GM12878 (cell line): ENCODE measurements at regions of chr5 and their contacts with region 1.

Region 1: GRCh38 chr5:95669540-95669939 is 13.3 kb downstream of the SPATA9 start:
- DNase-seq: no peak
- ATAC-seq: no peak
- H3K4me3 ChIP-seq: no peak overlapping the region
- H3K27ac ChIP-seq: no peak overlapping the region
- H3K4me1 ChIP-seq: no peaks in the 10 kb centered on the region
- H3K27me3 ChIP-seq: no peaks in the 10 kb centered on the region
- CTCF ChIP-seq: no peak
- EP300 ChIP-seq: no peak
- POLR2A ChIP-seq: no peak
- RAD21 ChIP-seq: no peak

Region 2: GRCh38 chr5:95417971-95418370 is 251.6 kb before region 1 on chr5:
- CTCF ChIA-PET with region 1: no interaction called
- POLR2A ChIA-PET with region 1: no interaction called
- RAD21 ChIA-PET with region 1: no interaction called
- SMC1A ChIA-PET with region 1: no interaction called
- in situ Hi-C with region 1: no loop called
- intact Hi-C with region 1: no loop called
- DNase-seq: no peak
- ATAC-seq: no peak
- H3K4me3 ChIP-seq: no peak overlapping the region
- H3K27ac ChIP-seq: no peak overlapping the region
- H3K4me1 ChIP-seq: no peaks in the 10 kb centered on the region
- H3K27me3 ChIP-seq: no peaks in the 10 kb centered on the region
- CTCF ChIP-seq: no peak
- EP300 ChIP-seq: no peak
- POLR2A ChIP-seq: no peak
- RAD21 ChIP-seq: no peak

Region 3: GRCh38 chr5:95723632-95724364 is 54.3 kb after region 1 on chr5:
- CTCF ChIA-PET with region 1: interaction called, 23 read pairs
- POLR2A ChIA-PET with region 1: no interaction called
- RAD21 ChIA-PET with region 1: interaction called, 14 read pairs
- SMC1A ChIA-PET with region 1: interaction called, 13 read pairs
- in situ Hi-C with region 1: no loop called
- intact Hi-C with region 1: no loop called
- DNase-seq: no peak
- ATAC-seq: no peak
- H3K4me3 ChIP-seq: no peak overlapping the region
- H3K27ac ChIP-seq: no peak overlapping the region
- H3K4me1 ChIP-seq: peaks cover 20% of the 10 kb centered on the region
- H3K27me3 ChIP-seq: no peaks in the 10 kb centered on the region
- CTCF ChIP-seq: no peak
- EP300 ChIP-seq: no peak
- POLR2A ChIP-seq: no peak
- RAD21 ChIP-seq: no peak

Region 4: DNA sequence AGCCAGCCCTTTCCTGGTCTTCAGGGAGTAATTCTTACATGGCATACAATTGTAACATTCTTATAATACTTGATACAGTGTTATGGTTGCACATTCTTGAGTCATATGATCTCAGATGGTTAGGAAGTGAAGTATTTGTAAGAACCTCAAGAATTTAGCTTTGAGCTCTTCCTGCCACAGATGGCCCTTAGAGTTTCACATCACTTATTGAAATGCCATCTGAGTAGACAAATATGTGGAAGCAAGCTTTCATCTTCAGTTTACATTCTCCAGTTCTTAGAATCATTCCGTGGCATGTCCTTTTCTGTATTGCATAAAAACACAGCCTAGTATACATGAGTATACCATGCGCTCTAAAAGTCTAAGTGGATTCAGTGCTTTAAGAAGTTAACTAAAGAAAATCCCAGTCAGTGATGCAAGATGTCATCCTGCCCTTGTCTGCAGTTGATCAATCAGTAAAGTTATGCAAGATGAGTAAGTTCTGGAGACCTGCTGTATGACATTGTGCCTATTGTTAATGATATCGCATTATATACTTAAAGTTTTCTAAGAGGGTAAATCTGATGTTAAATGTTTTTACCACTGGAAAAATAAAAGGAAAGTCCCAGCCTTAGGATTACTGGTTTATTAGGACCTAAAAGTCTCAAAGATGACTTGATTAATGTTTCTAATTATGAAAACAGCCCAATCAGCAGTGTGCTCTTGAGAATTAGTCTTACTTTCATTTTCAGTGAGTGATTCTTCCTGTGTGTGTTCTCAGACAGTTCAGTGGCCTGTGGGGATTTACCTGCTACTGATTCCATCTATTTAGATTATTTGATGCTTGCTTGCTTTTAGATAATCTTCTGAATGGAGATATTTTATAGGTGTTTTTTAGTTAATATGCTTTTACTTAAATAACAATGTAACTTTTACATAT is 91.0 kb after region 1 on chr5:
- CTCF ChIA-PET with region 1: interaction called, 35 read pairs
- POLR2A ChIA-PET with region 1: interaction called, 4 read pairs
- RAD21 ChIA-PET with region 1: interaction called, 5 read pairs
- SMC1A ChIA-PET with region 1: interaction called, 15 read pairs
- in situ Hi-C with region 1: no loop called
- intact Hi-C with region 1: loop called (anchors 1 kb)
- DNase-seq: peak; percentile 64
- ATAC-seq: peak; percentile 97
- H3K4me3 ChIP-seq: peak overlapping the region; percentile 56
- H3K27ac ChIP-seq: peak overlapping the region; percentile 94
- H3K4me1 ChIP-seq: peaks cover 16% of the 10 kb centered on the region
- H3K27me3 ChIP-seq: no peaks in the 10 kb centered on the region
- CTCF ChIP-seq: no peak
- EP300 ChIP-seq: peak; percentile 3 to 71; a peak in 1 of 4 replicates
- POLR2A ChIP-seq: no peak
- RAD21 ChIP-seq: no peak